Activated CD4-positive, alpha-beta T cell treated with anti-CD3 and anti-CD28 coated beads, Interleukin-2, amount 10 ng/mL, durations not matched to agents 24 days and 14 days (primary cell): ENCODE measurements at regions of chr12 and their contacts with region 1.

Region 1: GRCh38 chr12:2783936-2784600 is 10.7 kb upstream of the FKBP4 start:
- DNase-seq: peak; percentile 85
- H3K4me3 Mint-ChIP-seq: peak overlapping the region; percentile 71
- H3K27ac Mint-ChIP-seq: no peak overlapping the region
- H3K4me1 Mint-ChIP-seq: peaks cover 6% of the 10 kb centered on the region
- H3K27me3 Mint-ChIP-seq: peaks cover 37% of the 10 kb centered on the region

Region 2: DNA sequence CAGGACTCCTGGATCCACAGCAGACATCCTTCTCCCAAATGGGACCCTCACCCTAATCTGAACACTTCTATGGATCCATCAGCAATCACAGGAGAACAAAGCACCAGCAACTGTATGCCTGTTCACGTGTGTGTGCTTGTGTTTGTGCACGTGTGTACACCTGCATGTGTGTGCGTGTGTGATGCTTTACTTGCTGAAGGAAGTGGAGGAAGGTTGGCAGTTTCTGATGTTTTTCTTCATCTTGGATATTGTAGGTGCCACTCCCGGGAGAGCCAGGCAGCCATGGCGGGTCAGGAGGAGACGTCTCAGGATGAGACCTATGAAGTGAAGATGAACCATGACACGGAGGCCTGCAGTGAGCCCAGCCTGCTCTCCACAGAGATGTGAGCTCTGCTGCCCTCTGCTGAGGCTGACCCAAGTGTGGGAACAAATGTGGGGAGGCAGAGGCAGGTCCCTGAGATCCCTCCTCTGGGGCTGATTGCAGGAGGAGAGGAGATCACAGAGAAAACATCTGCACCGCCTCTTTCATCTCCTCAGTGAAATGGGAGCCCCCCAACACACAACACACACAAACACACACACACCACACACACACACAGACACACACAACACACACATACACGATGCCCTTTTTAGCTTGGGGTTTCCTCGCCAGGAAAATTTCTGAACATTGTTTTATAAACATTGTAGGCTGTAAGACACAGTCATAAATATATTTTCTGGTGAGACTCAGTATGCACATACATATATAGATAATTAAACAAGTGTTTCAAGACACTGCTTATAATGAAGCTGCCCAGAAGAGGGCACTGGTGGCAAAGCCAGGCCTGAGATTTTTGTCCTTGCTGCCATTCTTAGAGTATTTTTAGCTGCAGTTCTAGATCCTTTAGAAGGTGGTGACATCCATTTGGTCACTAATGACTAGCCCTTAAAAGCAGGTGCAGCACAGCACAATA is 101.5 kb before region 1 on chr12:
- intact Hi-C with region 1: loop called (anchors 1 kb)
- DNase-seq: peak; percentile 86
- H3K4me3 Mint-ChIP-seq: no peak overlapping the region
- H3K27ac Mint-ChIP-seq: peak overlapping the region; percentile 66
- H3K4me1 Mint-ChIP-seq: peaks cover 2% of the 10 kb centered on the region
- H3K27me3 Mint-ChIP-seq: no peaks in the 10 kb centered on the region

Region 3: GRCh38 chr12:2752676-2753371 is 31.2 kb before region 1 on chr12:
- intact Hi-C with region 1: no loop called
- DNase-seq: peak; percentile 96
- H3K4me3 Mint-ChIP-seq: no peak overlapping the region
- H3K27ac Mint-ChIP-seq: no peak overlapping the region
- H3K4me1 Mint-ChIP-seq: no peaks in the 10 kb centered on the region
- H3K27me3 Mint-ChIP-seq: peaks cover 26% of the 10 kb centered on the region